ENCODE measurements at regions of chr16 and their contacts with region 1.

Region 1: GRCh38 chr16:48353565-48354163 is 31.5 kb downstream of the SIAH1 start:
- DNase-seq: peak; percentile 47 to 65
- ATAC-seq: peak; percentile 88

Region 2: DNA sequence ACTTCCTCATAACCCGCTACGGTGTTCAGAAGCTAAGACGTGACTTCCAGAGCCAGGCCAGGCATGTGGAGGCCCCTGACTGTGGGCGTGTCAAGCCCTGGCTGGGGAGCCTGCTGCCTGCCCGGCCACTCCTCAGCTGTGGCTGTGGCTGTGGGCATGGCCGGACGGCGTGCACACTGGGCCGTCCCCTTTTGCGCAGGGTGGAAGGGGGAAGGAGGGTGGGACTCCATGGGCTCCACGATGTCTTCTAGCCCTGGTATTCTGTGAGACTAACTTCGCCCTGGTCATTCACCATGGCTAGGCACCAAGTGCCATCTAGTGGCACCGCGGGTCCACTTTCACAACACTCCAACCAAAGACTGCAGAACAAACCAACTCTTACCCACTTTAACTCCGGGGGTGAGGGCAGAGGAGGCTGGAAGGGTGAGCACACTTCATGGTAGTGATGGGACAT is 188.4 kb after region 1 on chr16:
- intact Hi-C with region 1: loop called in 1 of 2 experiments (anchors 10 kb)
- DNase-seq: peak; percentile 44 to 55
- ATAC-seq: peak; percentile 58

Region 3: DNA sequence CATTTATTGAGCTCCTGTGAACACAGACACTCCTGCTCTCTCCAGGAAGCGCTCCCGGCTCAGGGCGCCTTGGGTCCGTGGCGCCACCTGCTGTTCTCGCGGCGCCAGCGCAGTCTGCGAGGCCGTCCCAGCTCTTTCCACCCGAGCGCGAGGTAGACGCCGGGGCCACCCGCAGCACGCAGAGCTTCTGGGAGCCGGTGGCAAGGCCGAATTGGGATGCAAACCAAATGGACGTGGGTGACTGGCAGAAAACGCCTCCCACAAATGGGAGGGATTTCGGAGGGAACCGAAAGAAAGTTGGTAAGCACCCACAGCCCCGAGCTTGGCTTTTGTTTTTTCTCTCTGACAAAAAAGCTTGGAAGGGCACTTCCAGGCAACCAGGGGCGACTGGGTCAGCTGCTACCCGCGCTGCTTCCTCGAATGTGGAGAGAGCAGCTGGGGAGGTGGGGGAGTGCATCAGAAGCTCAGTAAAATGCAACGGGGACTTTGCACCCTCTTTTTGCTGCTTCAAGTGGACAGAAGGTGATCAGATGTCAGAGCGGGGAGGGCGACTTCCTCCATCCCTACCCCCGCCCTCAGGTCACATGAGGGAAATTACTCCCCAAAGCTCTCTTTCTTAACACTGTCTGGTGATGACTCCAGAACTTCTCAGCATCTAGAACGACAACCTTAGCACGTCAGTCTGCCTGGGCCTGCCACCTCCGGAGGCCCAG is 269.8 kb after region 1 on chr16:
- intact Hi-C with region 1: loop called in 1 of 2 experiments (anchors 5 kb)
- DNase-seq: peak; percentile 75 to 85
- ATAC-seq: peak; percentile 97

Region 4: GRCh38 chr16:48647794-48648193 is 294.1 kb after region 1 on chr16:
- intact Hi-C with region 1: no loop called
- DNase-seq: no peak
- ATAC-seq: no peak

Measured in left colon (tissue), 2 donors.